ENCODE measurements at regions of chr10 and their contacts with region 1.

Region 1: DNA sequence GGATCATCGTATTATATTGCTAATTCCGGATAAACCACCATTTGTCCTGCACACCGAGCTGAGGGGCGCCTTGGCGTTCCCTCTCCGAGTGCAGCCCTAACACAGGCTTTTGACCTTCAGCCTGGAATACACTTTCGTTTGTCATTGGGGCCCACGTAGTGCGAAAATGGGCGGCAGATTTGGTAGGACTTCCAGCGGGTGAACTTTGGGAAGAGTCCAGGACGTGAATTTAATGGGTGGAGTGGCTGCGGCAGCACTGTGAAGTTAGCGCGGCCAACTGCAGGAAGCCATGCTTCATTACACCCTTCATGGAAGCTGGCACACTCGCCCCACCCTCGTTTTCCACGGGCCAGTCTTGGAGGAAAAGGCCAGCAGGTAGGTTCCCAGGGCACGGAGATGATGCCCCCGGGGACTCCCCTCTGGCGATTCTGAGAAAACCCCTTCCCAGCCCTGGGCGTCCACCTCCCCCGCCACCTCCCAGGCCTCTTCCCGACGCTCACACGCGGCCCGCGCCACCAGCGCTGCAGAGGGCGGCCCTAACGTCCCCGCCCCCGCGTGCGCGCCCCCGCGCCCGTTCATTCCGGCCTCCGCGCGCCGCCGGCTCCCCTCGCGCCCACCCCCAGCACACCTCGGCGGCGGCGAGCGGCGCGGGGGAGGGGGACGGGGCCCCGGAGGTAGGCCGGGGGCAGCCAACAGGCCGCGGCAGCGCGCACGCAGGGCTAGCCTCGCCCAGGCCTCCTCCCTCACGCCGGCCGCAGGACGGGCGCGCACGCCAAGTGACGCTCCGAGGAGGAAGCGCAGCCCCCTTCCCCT is at the start of gene MLLT10:
- DNase-seq: peak; percentile 90 to 91 (median 91)
- H3K4me3 ChIP-seq: peak within 1 kb of the TSS; percentile 55 to 93 (median 91)
- H3K4me3 Mint-ChIP-seq: peak within 1 kb of the TSS; percentile 95 to 98
- H3K27ac ChIP-seq: peak within 1 kb of the TSS; percentile 81 to 82
- H3K27ac Mint-ChIP-seq: peak within 1 kb of the TSS; percentile 75 to 95 (median 92)
- H3K4me1 ChIP-seq: peaks cover 15 to 21% of the 10 kb centered on the region in 2 donors
- H3K4me1 Mint-ChIP-seq: peaks cover 25% of the 10 kb centered on the region
- H3K27me3 ChIP-seq: no peaks in the 10 kb centered on the region
- H3K27me3 Mint-ChIP-seq: no peaks in the 10 kb centered on the region
- CTCF ChIP-seq: peak; percentile 23
- polyA plus RNA-seq, gene MLLT10: 4.9 to 39.1 (median 7.5) TPM

Region 2: GRCh38 chr10:21488246-21488956 is 45.3 kb before region 1 on chr10:
- intact Hi-C with region 1: no loop called
- DNase-seq: no peak
- H3K4me3 ChIP-seq: no peak overlapping the region
- H3K4me3 Mint-ChIP-seq: no peak overlapping the region
- H3K27ac ChIP-seq: no peak overlapping the region
- H3K27ac Mint-ChIP-seq: no peak overlapping the region
- H3K4me1 ChIP-seq: no peaks in the 10 kb centered on the region
- H3K4me1 Mint-ChIP-seq: no peaks in the 10 kb centered on the region
- H3K27me3 ChIP-seq: no peaks in the 10 kb centered on the region
- H3K27me3 Mint-ChIP-seq: peaks cover 2 to 7% (median 3%) of the 10 kb centered on the region in 3 donors
- CTCF ChIP-seq: no peak

Region 3: DNA sequence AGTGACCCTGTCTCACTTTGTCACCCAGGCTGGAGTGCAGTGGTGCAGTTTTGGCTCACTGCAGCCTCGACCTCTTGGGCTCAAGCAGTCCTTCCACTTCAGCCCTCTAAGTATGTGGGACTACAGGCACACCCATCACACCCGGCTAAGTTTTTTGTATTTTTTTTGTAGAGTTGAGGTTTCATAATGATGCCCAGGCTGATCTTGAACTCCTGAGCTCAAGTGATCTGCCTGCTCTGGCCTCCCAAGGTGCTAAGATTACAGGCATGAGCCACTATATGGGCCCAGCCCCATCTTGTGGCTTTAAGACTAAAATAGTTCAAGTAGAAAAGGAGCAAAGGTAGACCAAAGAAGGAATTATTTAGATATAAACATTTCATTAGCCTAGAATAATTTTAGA is 65.9 kb after region 1 on chr10:
- intact Hi-C with region 1: no loop called
- DNase-seq: no peak
- H3K4me3 ChIP-seq: no peak overlapping the region
- H3K4me3 Mint-ChIP-seq: no peak overlapping the region
- H3K27ac ChIP-seq: no peak overlapping the region
- H3K27ac Mint-ChIP-seq: no peak overlapping the region
- H3K4me1 ChIP-seq: no peaks in the 10 kb centered on the region
- H3K4me1 Mint-ChIP-seq: no peaks in the 10 kb centered on the region
- H3K27me3 ChIP-seq: no peaks in the 10 kb centered on the region
- H3K27me3 Mint-ChIP-seq: no peaks in the 10 kb centered on the region
- CTCF ChIP-seq: no peak

Region 4: DNA sequence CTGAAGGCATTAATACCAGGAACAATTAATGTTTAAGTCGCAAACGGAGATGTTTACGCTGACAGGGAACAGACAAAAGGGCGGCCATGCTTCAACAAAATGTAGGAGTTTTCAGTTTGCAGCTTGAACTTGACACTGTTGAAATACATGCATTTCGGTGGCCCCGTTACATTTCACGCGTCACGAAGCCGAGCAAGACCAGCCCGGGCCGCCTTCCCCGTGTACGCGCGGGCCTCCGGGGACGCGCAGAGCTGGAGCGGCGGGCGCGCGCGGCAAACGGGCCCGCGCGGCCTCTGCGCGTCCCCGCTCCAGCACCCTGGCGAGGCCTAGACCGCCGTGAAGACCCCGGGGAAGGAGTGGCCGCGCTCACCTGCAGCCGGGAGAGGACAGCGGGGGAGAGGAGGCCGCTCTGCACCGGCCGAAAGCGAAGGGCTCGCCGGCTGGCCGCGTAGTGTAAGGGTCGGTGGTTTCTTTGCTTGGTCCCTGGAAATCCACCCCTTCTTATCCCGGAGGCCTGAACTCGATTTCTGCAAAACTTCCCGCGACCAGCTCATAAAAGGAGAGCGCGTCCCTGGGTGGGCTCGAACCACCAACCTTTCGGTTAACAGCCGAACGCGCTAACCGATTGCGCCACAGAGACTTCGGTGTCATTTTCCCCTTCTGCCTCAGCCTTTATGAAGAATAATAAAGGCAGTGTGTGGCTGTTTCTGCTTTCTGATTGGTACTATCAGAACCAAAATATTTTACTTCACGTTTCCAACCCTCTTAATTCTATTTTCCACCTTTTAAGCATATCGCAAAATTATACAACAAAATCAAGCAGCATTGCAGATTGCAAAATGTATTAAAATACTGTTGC is 695.5 kb after region 1 on chr10:
- intact Hi-C with region 1: loop called in 1 of 2 experiments (anchors 10 kb)
- DNase-seq: peak; percentile 82 to 86 (median 84)
- H3K4me3 ChIP-seq: peak overlapping the region; percentile 81
- H3K4me3 Mint-ChIP-seq: peak overlapping the region; percentile 87 to 90
- H3K27ac ChIP-seq: peak overlapping the region; percentile 74 to 81
- H3K27ac Mint-ChIP-seq: peak overlapping the region; percentile 79 to 94 (median 89)
- H3K4me1 ChIP-seq: peaks cover 16 to 22% of the 10 kb centered on the region in 2 donors
- H3K4me1 Mint-ChIP-seq: peaks cover 22% of the 10 kb centered on the region
- H3K27me3 ChIP-seq: peaks cover 0 to 2% of the 10 kb centered on the region in 2 donors
- H3K27me3 Mint-ChIP-seq: peaks cover under 1 to 8% (median 7%) of the 10 kb centered on the region in 3 donors
- CTCF ChIP-seq: no peak

Region 5: DNA sequence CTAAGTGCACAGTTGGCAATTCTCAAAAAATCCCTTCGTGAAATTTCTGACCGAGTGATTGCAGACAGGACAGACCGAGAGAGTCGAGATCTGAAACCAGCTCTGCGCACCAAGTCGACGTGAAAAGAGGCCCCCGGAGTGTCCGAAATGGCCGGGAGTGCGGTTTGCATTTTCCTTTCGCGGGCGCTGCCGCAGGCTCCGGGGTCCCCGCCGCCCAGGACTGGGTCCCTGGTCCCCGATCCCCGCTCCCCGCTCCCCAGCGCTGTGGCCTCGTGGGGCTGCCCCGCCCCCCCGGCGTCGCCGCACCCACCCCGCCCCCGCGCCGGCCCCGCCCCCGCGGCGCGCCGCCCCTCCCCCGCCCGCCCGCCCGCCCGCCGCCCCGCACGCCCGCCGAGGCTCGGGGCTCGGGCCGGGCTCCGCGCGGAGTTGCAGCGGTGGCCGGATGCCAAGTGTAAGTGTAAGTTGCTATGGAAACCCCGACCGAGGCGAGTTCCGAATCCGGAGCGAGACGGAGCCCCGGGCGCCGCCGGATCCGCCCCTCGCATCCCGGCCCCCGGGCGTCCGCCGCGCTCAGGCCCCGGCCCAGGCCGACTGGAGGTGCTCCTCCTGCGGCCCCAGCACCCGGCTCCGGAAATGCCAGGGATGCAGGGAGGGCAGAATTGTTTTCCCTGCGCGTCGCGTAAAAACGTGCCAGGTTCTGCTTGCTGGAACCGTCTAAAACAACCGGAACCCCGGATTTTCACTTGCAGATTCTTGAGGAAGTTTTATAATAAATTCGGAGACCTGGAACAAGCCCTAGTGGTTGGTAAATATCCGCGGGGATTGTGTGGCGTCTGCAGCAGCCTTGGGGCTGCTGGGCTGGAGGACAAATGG is 791.8 kb after region 1 on chr10:
- intact Hi-C with region 1: loop called in 1 of 2 experiments (anchors 10 kb)
- DNase-seq: peak in 2 of 3 donors; percentile 57 to 69
- H3K4me3 ChIP-seq: peak overlapping the region; percentile 43 to 79 (median 57)
- H3K4me3 Mint-ChIP-seq: peak overlapping the region; percentile 92 to 98
- H3K27ac ChIP-seq: no peak overlapping the region
- H3K27ac Mint-ChIP-seq: peak overlapping the region in 4 of 7 donors; percentile 33 to 81 (median 56)
- H3K4me1 ChIP-seq: peaks cover 26 to 27% of the 10 kb centered on the region in 2 donors
- H3K4me1 Mint-ChIP-seq: peaks cover 32% of the 10 kb centered on the region
- H3K27me3 ChIP-seq: peaks cover 38 to 50% of the 10 kb centered on the region in 2 donors
- H3K27me3 Mint-ChIP-seq: peaks cover 37 to 48% (median 40%) of the 10 kb centered on the region in 3 donors
- CTCF ChIP-seq: no peak